CD8-positive, alpha-beta T cell (primary cell): ENCODE measurements at regions of chr7 and their contacts with region 1.

Region 1: DNA sequence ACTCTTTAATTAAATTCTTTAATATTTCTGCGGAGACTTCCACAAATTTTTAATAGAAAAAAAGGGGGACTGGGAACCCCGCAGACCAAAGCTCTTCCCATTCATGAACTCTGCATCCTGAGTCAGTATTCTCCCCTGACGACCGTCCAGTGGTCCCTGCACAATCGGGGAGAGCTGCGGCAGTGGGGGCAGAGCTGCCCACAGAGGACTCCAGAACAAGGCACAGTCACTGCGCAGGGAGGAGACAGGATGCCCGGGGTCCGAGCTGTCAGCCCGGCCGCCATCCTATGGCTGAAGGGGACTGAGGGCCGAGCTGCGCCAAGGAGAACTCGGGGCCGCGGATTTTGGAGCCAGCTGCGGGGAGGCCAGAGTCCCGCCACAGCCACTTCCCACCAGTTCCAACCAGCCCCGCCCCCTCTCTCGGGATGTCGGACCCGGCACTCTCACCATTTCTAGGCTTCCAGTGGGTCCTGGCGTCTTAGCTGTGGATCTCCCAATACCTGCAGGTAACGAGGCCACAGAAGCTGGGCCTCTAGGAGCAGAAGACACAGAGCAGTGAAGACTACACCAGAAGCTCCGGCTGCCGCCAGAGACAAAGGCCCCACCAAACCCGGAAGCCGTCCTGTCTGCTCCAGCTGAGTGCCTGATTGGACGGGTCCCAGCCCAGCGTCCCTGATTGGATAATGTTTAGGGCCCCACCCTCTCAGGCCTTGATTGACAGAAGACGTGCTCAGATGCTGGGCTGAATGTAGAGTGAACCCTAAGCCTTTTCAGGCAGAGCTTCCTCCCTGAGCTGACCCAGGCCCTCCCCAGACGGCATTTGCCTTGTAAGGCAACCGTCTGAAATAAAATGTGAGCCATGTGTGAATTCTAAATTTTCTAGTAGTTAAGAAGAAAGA is at the start of gene ERV3-1:
- DNase-seq: peak; percentile 87 to 96 (median 92)
- ATAC-seq: peak; percentile 98
- H3K4me3 ChIP-seq: peak within 1 kb of the TSS; percentile 76 to 87
- H3K4me3 Mint-ChIP-seq: peak within 1 kb of the TSS; percentile 93
- H3K27ac ChIP-seq: peak within 1 kb of the TSS; percentile 84
- H3K27ac Mint-ChIP-seq: peak within 1 kb of the TSS; percentile 95
- H3K4me1 ChIP-seq: peaks cover 19% of the 10 kb centered on the region
- H3K4me1 Mint-ChIP-seq: peaks cover 42% of the 10 kb centered on the region
- H3K27me3 ChIP-seq: no peaks in the 10 kb centered on the region
- H3K27me3 Mint-ChIP-seq: no peaks in the 10 kb centered on the region
- CTCF ChIP-seq: no peak
- total RNA-seq, gene ERV3-1: 16.4 to 17.2 TPM

Region 2: GRCh38 chr7:64307254-64308015 is 698.9 kb before region 1 on chr7:
- CTCF ChIA-PET with region 1: no interaction called
- POLR2A ChIA-PET with region 1: interaction called, 4 read pairs
- intact Hi-C with region 1: loop called (anchors 1 to 10 kb)
- DNase-seq: peak; percentile 88 to 97 (median 94)
- ATAC-seq: peak; percentile 98
- H3K4me3 ChIP-seq: peak overlapping the region; percentile 71 to 80
- H3K4me3 Mint-ChIP-seq: peak overlapping the region; percentile 95
- H3K27ac ChIP-seq: peak overlapping the region; percentile 77 to 91
- H3K27ac Mint-ChIP-seq: peak overlapping the region; percentile 99
- H3K4me1 ChIP-seq: peaks cover 14% of the 10 kb centered on the region
- H3K4me1 Mint-ChIP-seq: peaks cover 14% of the 10 kb centered on the region
- H3K27me3 ChIP-seq: no peaks in the 10 kb centered on the region
- H3K27me3 Mint-ChIP-seq: no peaks in the 10 kb centered on the region
- CTCF ChIP-seq: no peak

Region 3: DNA sequence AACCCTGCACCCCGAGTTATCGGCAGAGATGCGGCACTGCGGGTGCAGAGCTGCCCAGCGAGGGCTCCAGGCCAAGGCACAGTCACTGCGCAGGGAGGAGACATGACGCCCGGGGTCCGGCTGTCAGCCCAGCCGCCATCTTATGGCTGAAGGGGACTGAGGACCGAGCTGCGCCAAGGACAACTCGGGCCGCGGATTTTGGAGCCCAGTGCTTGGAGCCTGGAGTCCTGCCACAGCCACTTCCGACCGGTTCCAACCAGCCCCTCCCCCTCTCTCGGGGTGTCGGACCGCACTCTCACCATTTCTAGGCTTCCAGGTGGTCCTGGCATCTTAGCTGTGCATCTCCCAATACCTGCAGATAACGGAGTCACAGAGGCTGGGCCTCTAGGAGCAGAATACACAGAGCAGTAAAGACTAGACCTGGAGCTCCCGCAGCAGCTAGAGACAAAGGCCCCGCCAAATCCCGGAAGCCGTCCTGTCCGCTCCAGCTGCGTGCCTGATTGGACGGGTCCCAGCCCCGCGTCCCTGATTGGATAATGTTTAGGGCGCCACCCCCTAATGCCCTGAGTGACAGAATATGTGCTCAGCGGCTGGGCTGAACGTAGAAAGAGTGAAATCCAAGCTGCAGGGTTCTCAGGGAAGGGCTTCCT is 443.6 kb before region 1 on chr7 and contains the start of gene ZNF680:
- CTCF ChIA-PET with region 1: no interaction called
- POLR2A ChIA-PET with region 1: interaction called, 9 read pairs
- intact Hi-C with region 1: loop called (anchors 2 to 10 kb)
- DNase-seq: peak; percentile 78 to 92 (median 89)
- ATAC-seq: peak; percentile 98
- H3K4me3 ChIP-seq: peak within 1 kb of the TSS; percentile 84 to 96
- H3K4me3 Mint-ChIP-seq: peak within 1 kb of the TSS; percentile 99
- H3K27ac ChIP-seq: peak within 1 kb of the TSS; percentile 69 to 71
- H3K27ac Mint-ChIP-seq: peak within 1 kb of the TSS; percentile 97
- H3K4me1 ChIP-seq: peaks cover 10% of the 10 kb centered on the region
- H3K4me1 Mint-ChIP-seq: peaks cover 33% of the 10 kb centered on the region
- H3K27me3 ChIP-seq: no peaks in the 10 kb centered on the region
- H3K27me3 Mint-ChIP-seq: no peaks in the 10 kb centered on the region
- CTCF ChIP-seq: no peak
- total RNA-seq, gene ZNF680: 6.8 to 8.4 TPM

Region 4: DNA sequence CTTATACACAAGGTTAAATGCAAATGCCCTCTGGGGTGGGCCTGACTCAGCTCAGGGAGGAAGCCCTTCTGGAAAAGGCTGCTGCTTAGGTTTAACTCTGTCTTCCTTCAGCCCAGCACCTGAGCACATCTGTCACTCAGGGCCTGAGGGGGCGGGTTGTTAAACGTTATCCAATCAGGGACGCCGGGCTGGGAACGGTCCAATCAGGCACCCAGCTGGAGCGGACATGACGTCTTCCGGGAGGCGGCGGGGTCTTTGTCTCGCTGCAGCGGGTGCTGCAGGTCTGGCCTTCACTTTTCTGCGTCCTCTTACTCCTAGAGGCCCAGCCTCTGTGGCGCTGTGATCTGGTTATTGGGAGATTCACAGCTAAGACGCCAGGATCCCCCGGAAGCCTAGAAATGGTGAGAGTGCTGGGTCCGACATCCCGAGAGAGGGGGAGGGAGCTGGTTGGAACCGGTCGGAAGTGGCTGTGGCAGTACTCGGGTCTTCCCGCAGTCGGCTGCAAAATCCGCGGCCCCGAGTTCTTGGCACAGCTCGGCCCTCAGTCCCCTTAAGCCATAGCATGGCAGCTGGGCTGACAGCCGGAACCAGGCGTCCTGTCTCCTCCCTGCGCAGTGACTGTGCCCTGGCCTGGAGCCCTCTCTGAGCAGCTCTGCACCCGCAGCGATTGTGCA is 212.0 kb before region 1 on chr7 and contains the start of gene ZNF138:
- CTCF ChIA-PET with region 1: no interaction called
- POLR2A ChIA-PET with region 1: interaction called, 7 read pairs
- intact Hi-C with region 1: loop called (anchors 1 to 10 kb)
- DNase-seq: peak; percentile 88 to 96 (median 94)
- ATAC-seq: peak; percentile 98
- H3K4me3 ChIP-seq: peak within 1 kb of the TSS; percentile 75 to 79
- H3K4me3 Mint-ChIP-seq: peak within 1 kb of the TSS; percentile 99
- H3K27ac ChIP-seq: peak within 1 kb of the TSS; percentile 87 to 90
- H3K27ac Mint-ChIP-seq: peak within 1 kb of the TSS; percentile 98
- H3K4me1 ChIP-seq: peaks cover 21% of the 10 kb centered on the region
- H3K4me1 Mint-ChIP-seq: peaks cover 35% of the 10 kb centered on the region
- H3K27me3 ChIP-seq: no peaks in the 10 kb centered on the region
- H3K27me3 Mint-ChIP-seq: no peaks in the 10 kb centered on the region
- CTCF ChIP-seq: no peak
- total RNA-seq, gene ZNF138: 4.9 to 5.3 TPM

Region 5: GRCh38 chr7:64892666-64893309 is 113.6 kb before region 1 on chr7:
- CTCF ChIA-PET with region 1: no interaction called
- POLR2A ChIA-PET with region 1: no interaction called
- intact Hi-C with region 1: no loop called
- DNase-seq: no peak
- ATAC-seq: no peak
- H3K4me3 ChIP-seq: no peak overlapping the region
- H3K4me3 Mint-ChIP-seq: no peak overlapping the region
- H3K27ac ChIP-seq: no peak overlapping the region
- H3K27ac Mint-ChIP-seq: no peak overlapping the region
- H3K4me1 ChIP-seq: peaks cover 14% of the 10 kb centered on the region
- H3K4me1 Mint-ChIP-seq: peaks cover 11% of the 10 kb centered on the region
- H3K27me3 ChIP-seq: peaks cover 11 to 16% of the 10 kb centered on the region in 2 experiments
- H3K27me3 Mint-ChIP-seq: peaks cover 25% of the 10 kb centered on the region
- CTCF ChIP-seq: no peak

Region 6: DNA sequence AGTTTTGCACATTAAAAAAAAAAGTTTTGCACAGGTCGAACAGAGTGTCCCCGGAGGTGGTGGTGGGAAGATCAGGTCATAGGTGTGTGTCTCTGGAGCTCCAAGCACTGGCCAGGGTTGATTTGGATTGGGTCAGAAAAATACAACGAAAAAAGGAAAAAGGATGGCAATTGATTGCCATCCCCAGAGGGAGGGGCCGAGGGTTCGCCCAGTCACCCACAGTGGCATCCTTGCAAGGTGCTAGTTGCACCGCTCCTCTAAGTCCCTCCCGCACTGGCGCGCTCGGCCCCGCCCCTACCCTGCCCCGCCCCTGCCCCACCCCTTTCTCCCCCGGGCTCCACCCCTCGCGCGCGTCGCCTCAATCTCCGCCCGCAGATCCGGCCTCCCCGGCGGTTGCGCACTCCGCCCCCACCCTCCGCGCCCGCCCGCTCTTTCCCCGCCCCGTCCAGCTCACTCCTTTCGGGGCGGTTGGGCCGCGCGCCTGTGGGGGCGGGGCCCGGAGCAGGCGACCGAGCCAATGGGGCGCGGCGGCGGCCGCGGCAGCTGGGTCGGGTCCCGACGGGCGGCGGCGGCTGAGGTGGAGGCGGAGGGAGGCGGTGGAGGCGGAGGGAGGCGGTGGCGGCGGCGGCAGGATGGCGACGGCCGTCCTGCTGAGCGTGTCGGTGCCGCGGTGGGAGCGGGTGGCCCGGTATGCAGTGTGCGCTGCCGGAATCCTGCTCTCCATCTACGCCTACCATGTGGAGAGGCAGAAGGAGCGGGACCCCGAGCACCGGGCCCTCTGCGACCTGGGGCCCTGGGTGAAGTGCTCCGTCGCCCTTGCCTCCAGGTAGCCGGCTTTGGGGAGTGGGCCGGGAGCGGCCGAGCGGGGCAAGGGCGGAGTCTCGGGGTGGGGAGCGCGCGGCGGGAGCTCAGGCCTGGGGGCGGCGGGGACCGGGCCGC is 31.7 kb after region 1 on chr7:
- CTCF ChIA-PET with region 1: no interaction called
- POLR2A ChIA-PET with region 1: interaction called, 21 read pairs
- intact Hi-C with region 1: loop called (anchors 1 kb)
- DNase-seq: peak; percentile 87 to 97 (median 94)
- ATAC-seq: peak; percentile 89
- H3K4me3 ChIP-seq: peak overlapping the region; percentile 52 to 69
- H3K4me3 Mint-ChIP-seq: peak overlapping the region; percentile 79
- H3K27ac ChIP-seq: peak overlapping the region; percentile 62 to 74
- H3K27ac Mint-ChIP-seq: peak overlapping the region; percentile 80
- H3K4me1 ChIP-seq: peaks cover 11% of the 10 kb centered on the region
- H3K4me1 Mint-ChIP-seq: peaks cover 14% of the 10 kb centered on the region
- H3K27me3 ChIP-seq: no peaks in the 10 kb centered on the region
- H3K27me3 Mint-ChIP-seq: no peaks in the 10 kb centered on the region
- CTCF ChIP-seq: peak; percentile 16

Region 7: DNA sequence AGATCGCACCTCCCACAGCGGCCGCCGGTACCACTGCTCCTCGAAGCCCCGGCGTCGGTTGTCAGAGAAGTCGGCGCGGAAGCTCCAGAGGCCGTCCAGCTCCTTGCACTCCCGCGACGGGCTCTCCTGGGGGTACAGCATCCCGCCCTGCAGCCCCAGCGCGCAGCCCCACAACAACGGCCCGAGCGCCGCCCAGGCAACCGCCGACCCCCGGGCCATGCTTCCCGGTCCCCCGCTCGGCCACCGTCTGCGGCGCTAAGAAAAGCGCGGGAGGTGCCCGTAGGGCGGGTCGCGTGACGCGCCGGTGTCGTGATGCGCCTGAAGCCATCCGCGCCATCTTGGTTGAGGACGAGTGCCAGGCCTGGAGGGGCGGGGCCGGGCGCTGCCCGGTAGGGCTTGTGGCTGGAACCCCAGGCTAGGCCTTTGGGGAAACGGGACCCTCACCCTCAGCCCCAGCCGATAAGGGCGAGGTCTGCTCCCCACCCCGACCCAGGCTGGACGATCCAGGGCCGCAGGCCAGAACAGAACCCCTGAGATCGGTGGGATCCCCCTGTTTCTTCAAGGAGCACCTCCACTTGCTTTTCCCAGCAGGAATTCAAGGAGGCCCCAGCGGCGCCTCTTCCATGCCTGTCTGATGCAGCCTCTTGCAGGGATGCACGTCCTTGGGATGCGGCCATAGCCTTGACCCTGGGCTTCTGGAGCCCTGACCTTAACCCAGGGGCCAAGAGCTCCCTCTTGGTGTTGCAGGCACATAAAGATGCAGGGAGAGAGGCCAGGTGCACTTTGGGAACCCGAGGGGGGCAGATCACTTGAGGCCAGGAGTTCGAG is 975.8 kb after region 1 on chr7 and contains the start of gene GUSB:
- CTCF ChIA-PET with region 1: no interaction called
- POLR2A ChIA-PET with region 1: no interaction called
- intact Hi-C with region 1: loop called in 1 of 2 experiments (anchors 5 kb)
- DNase-seq: peak; percentile 80 to 93 (median 90)
- ATAC-seq: peak; percentile 87
- H3K4me3 ChIP-seq: peak within 1 kb of the TSS; percentile 83 to 90
- H3K4me3 Mint-ChIP-seq: peak within 1 kb of the TSS; percentile 85
- H3K27ac ChIP-seq: peak within 1 kb of the TSS; percentile 69 to 73
- H3K27ac Mint-ChIP-seq: peak within 1 kb of the TSS; percentile 88
- H3K4me1 ChIP-seq: peaks cover 18% of the 10 kb centered on the region
- H3K4me1 Mint-ChIP-seq: peaks cover 14% of the 10 kb centered on the region
- H3K27me3 ChIP-seq: no peaks in the 10 kb centered on the region
- H3K27me3 Mint-ChIP-seq: no peaks in the 10 kb centered on the region
- CTCF ChIP-seq: no peak
- total RNA-seq, gene GUSB: 37.0 to 41.8 TPM

Region 8: GRCh38 chr7:66920769-66921395 is 1914.5 kb after region 1 on chr7 and contains the start of gene TMEM248:
- CTCF ChIA-PET with region 1: no interaction called
- POLR2A ChIA-PET with region 1: no interaction called
- intact Hi-C with region 1: loop called in 1 of 2 experiments (anchors 10 kb)
- DNase-seq: peak; percentile 84 to 96 (median 91)
- ATAC-seq: peak; percentile 90
- H3K4me3 ChIP-seq: peak within 1 kb of the TSS; percentile 83 to 94
- H3K4me3 Mint-ChIP-seq: peak within 1 kb of the TSS; percentile 98
- H3K27ac ChIP-seq: peak within 1 kb of the TSS; percentile 75 to 80
- H3K27ac Mint-ChIP-seq: peak within 1 kb of the TSS; percentile 97
- H3K4me1 ChIP-seq: peaks cover 20% of the 10 kb centered on the region
- H3K4me1 Mint-ChIP-seq: peaks cover 37% of the 10 kb centered on the region
- H3K27me3 ChIP-seq: no peaks in the 10 kb centered on the region
- H3K27me3 Mint-ChIP-seq: no peaks in the 10 kb centered on the region
- CTCF ChIP-seq: no peak
- total RNA-seq, gene TMEM248: 67.2 to 72.1 TPM